Posterior vena cava (tissue), 2 donors: ENCODE measurements at regions of chr21 and their contacts with region 1.

Region 1: DNA sequence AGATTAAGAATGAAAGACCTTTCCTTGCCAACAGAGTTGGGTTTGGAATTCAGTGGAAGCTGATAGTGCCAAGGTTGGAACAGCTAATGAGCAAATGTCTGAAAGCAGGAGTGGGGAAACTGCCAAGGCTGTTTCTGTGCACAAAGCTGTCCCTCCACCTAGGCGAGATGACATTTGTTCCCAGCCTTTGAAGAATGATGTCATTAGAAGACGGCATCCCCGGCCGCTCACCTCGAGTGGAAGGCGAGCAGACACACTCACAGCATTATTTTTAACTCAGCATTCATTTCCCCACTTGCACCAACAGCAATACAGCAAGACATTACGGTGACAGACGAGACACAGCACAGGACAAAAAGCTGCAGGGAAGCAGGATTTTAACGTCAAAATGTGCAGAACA is 463.9 kb downstream of the PCP4 start:
- DNase-seq: no peak

Region 2: DNA sequence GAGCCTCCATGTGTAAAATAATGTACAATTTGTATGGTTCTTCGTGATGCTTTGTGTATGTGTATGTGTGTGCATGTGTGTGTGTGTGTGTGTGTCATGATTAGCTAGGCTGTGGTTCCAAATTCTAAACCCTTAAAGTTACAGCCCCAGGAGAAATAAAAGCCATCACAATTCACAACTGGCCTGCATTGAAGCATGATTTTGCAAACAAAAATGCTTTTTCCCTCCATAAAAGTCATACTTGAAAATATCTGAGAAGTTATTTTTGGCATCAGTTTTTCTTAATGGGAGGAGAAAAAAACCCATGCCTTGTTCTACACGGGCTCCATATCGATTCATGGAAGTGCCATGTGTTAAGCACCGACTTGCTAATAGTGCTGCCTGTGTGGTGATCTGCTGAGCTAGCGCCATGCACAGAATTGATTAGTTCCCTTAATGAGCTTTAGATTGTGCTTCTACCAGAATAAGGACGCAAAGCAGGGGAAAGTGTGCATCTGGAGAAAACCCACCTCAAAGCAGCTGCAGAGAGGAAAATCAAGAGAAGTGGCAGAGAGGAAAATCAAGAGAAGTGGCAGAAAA is 308.5 kb after region 1 on chr21:
- intact Hi-C with region 1: loop called in 1 of 2 experiments (anchors 5 kb)
- DNase-seq: no peak